HepG2 (cell line): ENCODE measurements at regions of chr5 and their contacts with region 1.

Region 1: DNA sequence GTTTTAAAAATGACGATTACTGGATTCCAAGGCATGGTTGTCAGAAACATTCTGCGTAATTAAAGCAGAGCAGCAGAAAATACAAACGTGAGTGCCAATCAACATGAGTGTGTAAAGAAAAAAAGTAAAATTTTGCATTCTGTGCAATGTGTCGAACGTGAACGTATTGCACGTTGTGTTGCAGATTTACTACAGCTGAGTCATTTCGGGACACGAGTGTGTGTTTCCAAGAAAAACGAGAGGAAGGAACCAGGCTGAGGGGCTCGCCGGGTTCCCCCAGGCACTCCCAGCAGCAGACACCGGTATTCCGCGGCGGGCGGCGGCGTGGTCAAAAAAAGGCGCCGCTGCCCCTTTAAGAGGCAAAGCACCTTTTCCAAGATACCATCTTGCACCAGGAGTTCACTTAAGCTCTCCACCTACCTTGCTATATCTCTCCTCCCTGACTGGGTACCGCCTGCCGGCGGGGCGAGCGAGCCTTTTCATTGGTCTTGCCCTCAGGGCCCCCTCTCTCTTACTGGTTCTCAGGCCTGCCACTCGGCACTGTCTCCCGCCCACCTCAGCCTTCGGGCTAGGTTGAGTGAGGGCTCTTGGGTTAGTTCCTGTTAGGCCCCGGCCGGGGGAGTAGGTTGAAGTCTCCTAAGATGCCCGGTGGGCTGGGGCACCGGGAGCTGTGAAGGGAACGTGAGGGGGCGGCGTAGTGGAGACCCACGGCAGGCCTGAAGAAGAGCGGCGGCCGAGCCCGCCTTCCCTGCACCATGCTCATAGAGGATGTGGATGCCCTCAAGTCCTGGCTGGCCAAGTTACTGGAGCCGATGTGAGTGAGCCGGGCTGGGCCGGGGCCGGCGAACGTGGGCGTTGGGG is at the start of gene RBM27:
- DNase-seq: peak; percentile 97
- ATAC-seq: peak; percentile 100
- H3K4me3 ChIP-seq: peak within 1 kb of the TSS; percentile 89 to 94 (median 89)
- H3K27ac ChIP-seq: peak within 1 kb of the TSS; percentile 81
- H3K4me1 ChIP-seq: peaks cover 56% of the 10 kb centered on the region
- H3K27me3 ChIP-seq: no peaks in the 10 kb centered on the region; a peak in 1 of 5 replicates
- CTCF ChIP-seq: no peak
- EP300 ChIP-seq: no peak
- POLR2A ChIP-seq: peak; percentile 55 to 69
- RAD21 ChIP-seq: no peak
- total RNA-seq, gene RBM27: 23.4 and 31.2 TPM in 2 replicates

Region 2: DNA sequence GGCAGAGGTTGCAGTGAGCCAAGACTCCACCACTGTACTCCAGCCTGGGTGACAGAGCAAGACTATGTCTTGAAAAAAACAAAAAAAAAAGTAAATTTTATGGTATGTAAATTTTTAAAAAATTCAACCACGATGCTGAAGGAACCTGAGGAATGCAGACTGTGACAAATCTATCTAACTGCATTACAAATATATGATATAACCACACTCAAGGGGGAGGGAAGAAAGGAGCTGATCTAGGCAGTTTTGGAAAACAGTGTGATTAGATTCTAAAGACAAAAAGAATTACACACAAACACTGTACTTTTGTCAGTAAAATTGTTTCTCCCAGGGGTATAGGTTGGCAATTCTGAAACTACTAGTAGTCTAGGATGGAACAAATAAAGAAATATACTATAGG is 37.8 kb before region 1 on chr5:
- CTCF ChIA-PET with region 1: no interaction called
- POLR2A ChIA-PET with region 1: interaction called, 7 read pairs
- in situ Hi-C with region 1: no loop called
- intact Hi-C with region 1: loop called (anchors 5 kb)
- DNase-seq: no peak
- ATAC-seq: no peak
- H3K4me3 ChIP-seq: no peak overlapping the region
- H3K27ac ChIP-seq: no peak overlapping the region
- H3K4me1 ChIP-seq: peaks cover 18% of the 10 kb centered on the region
- H3K27me3 ChIP-seq: no peaks in the 10 kb centered on the region
- CTCF ChIP-seq: no peak
- EP300 ChIP-seq: no peak
- POLR2A ChIP-seq: no peak
- RAD21 ChIP-seq: no peak

Region 3: DNA sequence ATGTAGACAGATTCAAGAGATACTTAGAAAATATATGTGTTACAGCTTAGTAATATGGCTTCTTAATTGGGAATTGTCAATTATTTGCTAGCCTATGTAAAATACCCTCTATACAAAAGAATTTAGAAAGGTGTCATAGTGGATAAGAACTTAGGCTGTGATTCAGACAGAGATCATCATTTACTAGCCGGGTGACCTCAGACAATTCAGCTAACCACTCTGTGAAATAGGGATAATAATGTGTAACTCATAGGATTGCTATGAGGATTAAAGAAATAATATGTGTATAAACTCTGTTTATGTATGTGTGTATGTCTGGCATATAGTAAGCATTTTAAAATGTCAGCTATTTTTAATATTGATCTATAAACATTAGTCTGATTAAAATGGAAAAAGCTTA is 14.9 kb before region 1 on chr5:
- CTCF ChIA-PET with region 1: no interaction called
- POLR2A ChIA-PET with region 1: interaction called, 17 read pairs
- in situ Hi-C with region 1: no loop called
- intact Hi-C with region 1: no loop called
- DNase-seq: no peak
- ATAC-seq: no peak
- H3K4me3 ChIP-seq: no peak overlapping the region
- H3K27ac ChIP-seq: no peak overlapping the region
- H3K4me1 ChIP-seq: peaks cover 29% of the 10 kb centered on the region
- H3K27me3 ChIP-seq: no peaks in the 10 kb centered on the region
- CTCF ChIP-seq: no peak
- EP300 ChIP-seq: no peak
- POLR2A ChIP-seq: no peak
- RAD21 ChIP-seq: no peak

Region 4: DNA sequence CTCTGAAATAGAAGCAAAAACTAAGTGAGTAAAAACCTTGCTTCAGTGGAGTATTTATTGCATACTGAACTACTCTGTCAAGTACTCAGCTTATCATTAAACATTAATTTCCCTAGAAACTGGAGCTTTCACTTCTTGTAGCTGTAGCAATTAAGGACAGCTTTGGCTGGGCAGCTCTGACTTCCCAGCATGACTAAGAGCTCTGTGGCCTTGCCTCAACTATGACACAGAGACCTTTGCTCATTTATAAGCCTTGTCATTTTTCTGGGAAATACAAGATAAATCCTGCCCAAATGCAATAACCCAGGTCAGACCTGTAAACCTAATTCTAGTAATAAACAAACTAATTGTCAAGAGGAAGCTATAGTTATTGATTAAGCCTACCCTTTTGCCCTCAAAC is 966.2 kb after region 1 on chr5:
- CTCF ChIA-PET with region 1: no interaction called
- POLR2A ChIA-PET with region 1: no interaction called
- in situ Hi-C with region 1: no loop called
- intact Hi-C with region 1: loop called (anchors 10 kb)
- DNase-seq: peak; percentile 62
- ATAC-seq: peak; percentile 45
- H3K4me3 ChIP-seq: peak overlapping the region in 2 of 3 experiments; percentile 8 to 30; a peak in 1 of 6 replicates
- H3K27ac ChIP-seq: peak overlapping the region; percentile 92
- H3K4me1 ChIP-seq: peaks cover 73% of the 10 kb centered on the region
- H3K27me3 ChIP-seq: no peaks in the 10 kb centered on the region
- CTCF ChIP-seq: no peak
- EP300 ChIP-seq: peak in 1 of 2 experiments; percentile 74; a peak in 2 of 4 replicates
- POLR2A ChIP-seq: no peak
- RAD21 ChIP-seq: no peak